Activated B cell treated with CpG ODN at 0.5 μM for 24 hours (primary cell): ENCODE measurements at regions of chr16 and their contacts with region 1.

Region 1: GRCh38 chr16:81314603-81315270 is at the start of gene GAN:
- DNase-seq: peak; percentile 89
- ATAC-seq: peak; percentile 95
- H3K4me3 Mint-ChIP-seq: peak within 1 kb of the TSS; percentile 96
- H3K27ac Mint-ChIP-seq: peak within 1 kb of the TSS; percentile 91
- H3K4me1 Mint-ChIP-seq: peaks cover 29% of the 10 kb centered on the region
- H3K27me3 Mint-ChIP-seq: no peaks in the 10 kb centered on the region
- CTCF ChIP-seq: no peak
- total RNA-seq, gene GAN: 5.1 and 8.6 TPM in 2 replicates

Region 2: DNA sequence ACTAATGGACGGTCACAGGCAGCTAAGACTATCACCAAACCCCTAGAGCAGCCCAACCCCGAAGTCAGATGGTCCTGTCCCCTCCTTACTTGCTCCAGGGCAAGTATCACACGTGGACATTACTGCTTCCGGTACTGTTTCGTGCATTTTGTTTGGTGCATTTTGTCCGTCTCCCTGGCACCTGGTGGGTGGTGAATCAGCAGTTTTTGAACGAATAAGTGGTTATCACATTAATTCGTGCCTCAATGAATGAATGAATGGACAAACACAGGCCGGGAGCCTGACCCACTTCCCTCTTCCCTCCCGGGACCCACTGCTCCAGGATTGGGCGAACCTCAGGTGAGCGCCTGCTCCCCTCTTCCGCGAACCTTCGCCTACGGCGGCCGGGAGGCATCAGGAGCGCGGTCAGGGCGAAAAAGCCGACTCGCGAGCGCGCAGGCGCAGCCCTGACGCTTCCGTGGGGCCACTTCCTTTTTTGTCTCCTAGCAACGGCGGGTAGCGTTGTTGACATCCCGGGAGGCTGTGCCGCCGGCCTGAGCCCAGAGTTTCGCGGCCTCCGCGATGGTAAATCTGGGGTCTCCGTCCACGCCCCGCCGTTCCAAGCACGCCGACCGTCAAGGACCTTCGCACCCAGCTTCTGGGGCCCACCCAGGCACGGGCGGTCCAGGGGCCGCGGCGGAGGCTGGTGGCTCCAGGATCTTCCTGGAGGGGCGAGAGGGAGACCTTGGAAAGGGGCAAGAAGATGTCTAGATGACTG is 774.0 kb before region 1 on chr16 and contains the start of gene DYNLRB2:
- CTCF ChIA-PET with region 1: no interaction called
- POLR2A ChIA-PET with region 1: no interaction called
- intact Hi-C with region 1: loop called (anchors 2 kb)
- DNase-seq: peak; percentile 90
- ATAC-seq: peak; percentile 92
- H3K4me3 Mint-ChIP-seq: peak within 1 kb of the TSS; percentile 96
- H3K27ac Mint-ChIP-seq: peak within 1 kb of the TSS; percentile 96
- H3K4me1 Mint-ChIP-seq: peaks cover 16% of the 10 kb centered on the region
- H3K27me3 Mint-ChIP-seq: peaks cover 7% of the 10 kb centered on the region
- CTCF ChIP-seq: no peak
- total RNA-seq, gene DYNLRB2: 0.71 TPM in 1 of 2 replicates, not detected in the other

Region 3: GRCh38 chr16:81035398-81035974 is 279.3 kb before region 1 on chr16 and contains the start of gene ATMIN:
- CTCF ChIA-PET with region 1: interaction called, 6 read pairs
- POLR2A ChIA-PET with region 1: no interaction called
- intact Hi-C with region 1: loop called (anchors 10 kb)
- DNase-seq: peak; percentile 92
- ATAC-seq: peak; percentile 97
- H3K4me3 Mint-ChIP-seq: peak within 1 kb of the TSS; percentile 79
- H3K27ac Mint-ChIP-seq: peak within 1 kb of the TSS; percentile 30
- H3K4me1 Mint-ChIP-seq: peaks cover 22% of the 10 kb centered on the region
- H3K27me3 Mint-ChIP-seq: no peaks in the 10 kb centered on the region
- CTCF ChIP-seq: peak; percentile 90
- total RNA-seq, gene ATMIN: 30.6 and 31.0 TPM in 2 replicates

Region 4: GRCh38 chr16:81095953-81096717 is 218.6 kb before region 1 on chr16 and contains the start of gene GCSH:
- CTCF ChIA-PET with region 1: no interaction called
- POLR2A ChIA-PET with region 1: no interaction called
- intact Hi-C with region 1: loop called (anchors 1 kb)
- DNase-seq: peak; percentile 97
- ATAC-seq: peak; percentile 97
- H3K4me3 Mint-ChIP-seq: peak within 1 kb of the TSS; percentile 83
- H3K27ac Mint-ChIP-seq: peak within 1 kb of the TSS; percentile 50
- H3K4me1 Mint-ChIP-seq: peaks cover 18% of the 10 kb centered on the region
- H3K27me3 Mint-ChIP-seq: no peaks in the 10 kb centered on the region
- CTCF ChIP-seq: no peak
- total RNA-seq, gene GCSH: 8.4 and 8.8 TPM in 2 replicates

Region 5: DNA sequence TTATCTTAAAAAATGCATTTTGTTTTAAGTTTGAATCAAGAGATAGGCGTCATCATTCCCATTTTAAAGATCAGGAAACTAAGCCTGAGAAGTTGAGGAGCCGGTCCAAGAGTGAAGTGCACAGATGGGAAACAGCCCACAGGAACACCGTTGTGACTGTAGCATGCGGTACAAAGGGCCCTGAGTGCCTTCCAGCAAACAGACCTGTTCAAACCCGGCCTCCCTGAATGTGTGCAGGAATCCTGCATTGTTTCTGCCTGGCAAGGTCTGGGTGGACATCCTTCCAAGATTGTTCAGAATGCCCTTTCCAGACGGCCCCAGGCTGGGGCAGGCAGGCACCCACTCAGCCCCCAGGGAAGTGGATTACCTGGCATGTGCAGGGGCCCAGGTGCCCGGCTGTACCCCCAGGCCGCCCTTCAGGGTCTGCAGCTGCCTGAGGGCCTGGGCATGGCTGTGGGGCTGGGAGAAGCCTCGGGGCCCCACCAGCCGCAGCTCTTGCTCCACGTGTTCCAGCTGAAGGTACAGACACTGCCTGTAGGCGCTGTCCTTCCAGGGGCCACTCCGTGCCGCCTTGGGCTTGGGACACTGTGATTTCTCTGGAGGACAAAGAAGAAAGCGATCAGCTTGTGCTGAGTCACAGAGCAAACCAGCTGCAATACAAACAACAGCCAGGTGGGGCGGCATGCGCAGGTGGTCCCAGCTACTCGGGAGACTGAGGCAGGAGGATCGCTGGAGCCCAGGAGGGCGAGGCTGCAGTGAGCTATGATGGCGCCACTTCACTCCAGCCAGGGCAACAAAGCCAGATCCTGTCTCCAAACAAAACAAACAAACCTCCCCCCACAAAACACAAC is 173.6 kb before region 1 on chr16:
- CTCF ChIA-PET with region 1: no interaction called
- POLR2A ChIA-PET with region 1: no interaction called
- intact Hi-C with region 1: no loop called
- DNase-seq: no peak
- ATAC-seq: no peak
- H3K4me3 Mint-ChIP-seq: no peak overlapping the region
- H3K27ac Mint-ChIP-seq: no peak overlapping the region
- H3K4me1 Mint-ChIP-seq: no peaks in the 10 kb centered on the region
- H3K27me3 Mint-ChIP-seq: peaks cover 8% of the 10 kb centered on the region
- CTCF ChIP-seq: no peak

Region 6: DNA sequence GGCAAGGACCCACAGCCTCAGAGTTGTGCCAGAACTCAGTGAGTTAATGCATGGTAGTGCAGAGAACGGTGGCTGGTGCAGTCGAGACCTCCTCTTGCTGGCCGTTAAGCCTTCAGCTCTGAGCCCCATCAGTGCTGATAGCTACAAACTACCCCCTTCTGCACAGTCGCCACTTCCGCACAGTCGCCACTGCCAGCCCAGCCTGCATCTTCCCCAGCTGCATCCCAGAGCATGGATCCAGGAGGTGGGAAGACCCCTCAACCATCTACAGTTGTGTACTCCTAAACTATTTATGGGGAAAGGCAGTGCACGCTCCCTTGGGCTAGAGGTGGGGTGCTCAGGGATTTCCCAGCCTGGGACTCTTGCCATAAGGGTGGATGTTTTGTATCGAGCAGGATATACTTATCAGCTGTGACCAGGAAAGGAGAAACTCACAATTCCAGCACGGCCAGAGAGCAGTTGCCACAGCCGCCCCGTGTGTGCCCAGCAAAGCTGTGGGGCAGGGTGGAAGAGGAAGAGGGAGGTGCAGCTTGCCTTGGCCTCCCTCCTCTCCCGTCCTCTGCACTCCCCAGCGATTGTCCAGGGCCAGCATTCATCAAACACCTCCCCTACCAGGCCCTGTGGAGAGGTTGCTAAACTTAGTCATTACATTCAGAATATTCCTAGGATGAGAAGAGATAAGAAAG is 80.4 kb after region 1 on chr16:
- CTCF ChIA-PET with region 1: no interaction called
- POLR2A ChIA-PET with region 1: no interaction called
- intact Hi-C with region 1: no loop called
- DNase-seq: no peak
- ATAC-seq: no peak
- H3K4me3 Mint-ChIP-seq: no peak overlapping the region
- H3K27ac Mint-ChIP-seq: no peak overlapping the region
- H3K4me1 Mint-ChIP-seq: no peaks in the 10 kb centered on the region
- H3K27me3 Mint-ChIP-seq: no peaks in the 10 kb centered on the region
- CTCF ChIP-seq: no peak